ENCODE measurements at regions of chr9 and their contacts with region 1.

Region 1: GRCh38 chr9:96654443-96655197 is 497 bp downstream of the PRXL2C start:
- H3K4me3 Mint-ChIP-seq: peak overlapping the region; percentile 84
- H3K27ac Mint-ChIP-seq: peak overlapping the region; percentile 97
- H3K4me1 Mint-ChIP-seq: peaks cover 50% of the 10 kb centered on the region
- H3K27me3 Mint-ChIP-seq: no peaks in the 10 kb centered on the region

Region 2: GRCh38 chr9:95875305-95876137 is 779.1 kb before region 1 on chr9 and contains the start of gene ERCC6L2:
- intact Hi-C with region 1: loop called (anchors 10 kb)
- H3K4me3 Mint-ChIP-seq: no peak within 1 kb of the TSS
- H3K27ac Mint-ChIP-seq: no peak within 1 kb of the TSS
- H3K4me1 Mint-ChIP-seq: peaks cover 10% of the 10 kb centered on the region
- H3K27me3 Mint-ChIP-seq: no peaks in the 10 kb centered on the region

Region 3: DNA sequence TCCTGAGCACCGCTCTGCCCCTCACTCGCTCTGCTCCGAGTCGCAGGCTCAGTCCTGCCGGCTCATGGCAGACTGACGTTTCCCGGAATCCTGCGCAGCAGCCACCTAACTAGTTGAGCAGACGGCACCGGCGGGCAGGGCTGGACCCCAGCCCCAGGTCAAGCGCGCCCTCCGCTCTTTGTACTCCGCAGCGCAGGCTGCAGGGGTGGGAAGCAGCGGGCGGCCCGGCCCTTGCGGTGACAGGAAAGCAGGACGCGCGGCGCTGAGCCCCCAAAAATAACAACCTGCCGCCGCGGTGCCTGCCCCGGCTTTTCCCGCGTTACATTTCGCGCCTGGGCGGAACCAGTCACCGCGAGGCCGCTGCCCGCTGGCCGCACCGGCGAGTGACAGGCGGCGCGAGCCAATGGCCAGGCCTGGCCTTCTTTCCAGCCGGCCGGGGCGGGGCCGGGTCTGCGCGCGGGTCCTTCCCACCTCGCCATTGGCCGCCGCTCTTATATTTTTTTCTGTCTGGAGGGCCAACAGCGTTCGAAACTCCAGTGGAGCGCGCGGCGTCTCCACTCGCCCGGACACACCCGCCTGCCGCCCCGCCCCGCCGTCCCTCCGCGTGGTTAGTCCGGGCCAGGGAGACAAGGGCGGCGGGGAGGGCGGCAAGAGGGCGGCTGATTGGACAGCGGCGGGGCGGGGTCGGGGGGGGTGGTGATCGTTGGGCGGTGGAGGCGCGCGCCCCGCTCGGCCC is 236.4 kb before region 1 on chr9 and contains the start of gene ZNF367:
- intact Hi-C with region 1: loop called (anchors 2 kb)
- H3K4me3 Mint-ChIP-seq: peak within 1 kb of the TSS; percentile 85
- H3K27ac Mint-ChIP-seq: peak within 1 kb of the TSS; percentile 97
- H3K4me1 Mint-ChIP-seq: peaks cover 32% of the 10 kb centered on the region
- H3K27me3 Mint-ChIP-seq: no peaks in the 10 kb centered on the region

Region 4: GRCh38 chr9:96449845-96450612 is 204.6 kb before region 1 on chr9 and contains the start of gene HABP4:
- intact Hi-C with region 1: loop called (anchors 2 kb)
- H3K4me3 Mint-ChIP-seq: peak within 1 kb of the TSS; percentile 74
- H3K27ac Mint-ChIP-seq: peak within 1 kb of the TSS; percentile 62
- H3K4me1 Mint-ChIP-seq: peaks cover 19% of the 10 kb centered on the region
- H3K27me3 Mint-ChIP-seq: peaks cover 60% of the 10 kb centered on the region

Region 5: GRCh38 chr9:96574931-96575351 is 79.7 kb before region 1 on chr9:
- intact Hi-C with region 1: no loop called
- H3K4me3 Mint-ChIP-seq: no peak overlapping the region
- H3K27ac Mint-ChIP-seq: no peak overlapping the region
- H3K4me1 Mint-ChIP-seq: peaks cover 6% of the 10 kb centered on the region
- H3K27me3 Mint-ChIP-seq: peaks cover 4% of the 10 kb centered on the region

Region 6: DNA sequence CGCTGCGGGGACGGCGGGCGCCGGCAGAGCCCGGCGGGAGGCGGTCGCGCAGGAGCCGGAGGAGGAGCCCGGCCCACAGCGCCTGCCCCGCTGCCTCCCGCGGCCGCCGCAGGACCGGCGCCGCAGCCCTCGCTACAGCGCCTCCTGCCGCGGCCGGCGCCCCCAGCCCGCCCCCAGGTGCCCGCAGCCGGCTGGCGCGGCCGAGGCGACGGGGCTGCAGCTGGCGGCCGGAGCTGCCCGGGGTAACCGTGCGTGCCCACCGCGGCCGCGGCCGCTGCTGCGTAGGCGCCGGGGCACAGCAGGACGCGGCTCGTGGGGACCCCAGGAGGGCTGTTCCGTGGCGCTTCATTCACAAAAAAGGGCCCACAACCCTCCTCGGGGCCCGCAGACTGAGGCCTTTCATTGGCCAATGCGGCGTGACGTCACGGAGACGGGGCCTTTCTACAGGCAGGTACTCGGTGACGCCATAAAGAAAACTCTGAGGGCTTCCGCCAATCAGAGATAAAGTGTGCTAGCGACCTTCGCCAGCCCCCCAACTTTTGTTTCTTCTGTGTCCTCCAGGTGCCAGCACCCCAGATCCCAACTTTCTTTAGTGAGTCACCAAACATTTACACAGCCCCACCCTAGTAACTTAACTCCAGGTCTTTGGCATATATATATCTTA is 35.0 kb before region 1 on chr9 and contains the start of gene CDC14B:
- intact Hi-C with region 1: loop called (anchors 2 kb)
- H3K4me3 Mint-ChIP-seq: peak within 1 kb of the TSS; percentile 67
- H3K27ac Mint-ChIP-seq: no peak within 1 kb of the TSS
- H3K4me1 Mint-ChIP-seq: no peaks in the 10 kb centered on the region
- H3K27me3 Mint-ChIP-seq: peaks cover 67% of the 10 kb centered on the region

Measured in dendritic cell treated with granulocyte-macrophage colony-stimulating factor and Interleukin-4, amounts not matched to agents 40 ng/mL and 50 ng/mL, for 4 days (primary cell).